Activated CD8-positive, alpha-beta T cell treated with anti-CD3 and anti-CD28 coated beads for 36 hours (primary cell): ENCODE measurements at regions of chr2 and their contacts with region 1.

Region 1: GRCh38 chr2:144332356-144333142 is 187.4 kb downstream of the ZEB2 start:
- DNase-seq: peak; percentile 85
- ATAC-seq: peak; percentile 87
- H3K4me3 Mint-ChIP-seq: peak overlapping the region; percentile 95
- H3K27ac Mint-ChIP-seq: peak overlapping the region; percentile 91
- H3K4me1 Mint-ChIP-seq: peaks cover 40% of the 10 kb centered on the region
- H3K27me3 Mint-ChIP-seq: no peaks in the 10 kb centered on the region
- CTCF ChIP-seq: no peak

Region 2: DNA sequence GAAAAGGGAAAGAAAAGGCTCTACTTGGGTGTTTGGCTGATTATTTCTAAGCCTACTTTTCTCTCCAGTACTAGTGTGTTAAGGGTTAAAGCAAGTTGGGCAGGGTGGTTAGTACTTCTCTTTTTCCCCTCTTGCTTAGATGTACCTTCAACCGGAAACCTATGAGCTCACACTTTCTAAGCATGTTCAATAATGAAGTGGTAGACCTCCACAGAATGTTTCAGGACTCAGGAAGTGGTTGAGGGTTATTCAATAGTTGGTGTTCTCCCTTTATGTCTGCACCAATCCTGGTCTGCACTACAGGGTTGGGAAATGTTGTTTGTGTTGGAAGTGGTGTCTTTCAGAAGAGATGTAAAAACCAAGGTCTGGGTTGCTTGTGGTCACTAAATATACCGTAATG is 50.3 kb after region 1 on chr2:
- CTCF ChIA-PET with region 1: interaction called, 3 read pairs
- POLR2A ChIA-PET with region 1: no interaction called
- intact Hi-C with region 1: loop called (anchors 5 kb)
- DNase-seq: peak; percentile 51
- ATAC-seq: peak; percentile 96
- H3K4me3 Mint-ChIP-seq: peak overlapping the region; percentile 14
- H3K27ac Mint-ChIP-seq: peak overlapping the region; percentile 68
- H3K4me1 Mint-ChIP-seq: peaks cover 42% of the 10 kb centered on the region
- H3K27me3 Mint-ChIP-seq: no peaks in the 10 kb centered on the region
- CTCF ChIP-seq: no peak